Activated CD4-positive, alpha-beta T cell treated with anti-CD3 and anti-CD28 coated beads for 36 hours (primary cell): ENCODE measurements at regions of chr7 and their contacts with region 1.

Region 1: GRCh38 chr7:134514663-134515062 is 12.7 kb upstream of the AKR1B10 start:
- DNase-seq: peak; percentile 15
- ATAC-seq: peak; percentile 77
- H3K4me3 Mint-ChIP-seq: no peak overlapping the region
- H3K27ac Mint-ChIP-seq: no peak overlapping the region
- H3K4me1 Mint-ChIP-seq: peaks cover 10% of the 10 kb centered on the region
- H3K27me3 Mint-ChIP-seq: peaks cover 5% of the 10 kb centered on the region

Region 2: DNA sequence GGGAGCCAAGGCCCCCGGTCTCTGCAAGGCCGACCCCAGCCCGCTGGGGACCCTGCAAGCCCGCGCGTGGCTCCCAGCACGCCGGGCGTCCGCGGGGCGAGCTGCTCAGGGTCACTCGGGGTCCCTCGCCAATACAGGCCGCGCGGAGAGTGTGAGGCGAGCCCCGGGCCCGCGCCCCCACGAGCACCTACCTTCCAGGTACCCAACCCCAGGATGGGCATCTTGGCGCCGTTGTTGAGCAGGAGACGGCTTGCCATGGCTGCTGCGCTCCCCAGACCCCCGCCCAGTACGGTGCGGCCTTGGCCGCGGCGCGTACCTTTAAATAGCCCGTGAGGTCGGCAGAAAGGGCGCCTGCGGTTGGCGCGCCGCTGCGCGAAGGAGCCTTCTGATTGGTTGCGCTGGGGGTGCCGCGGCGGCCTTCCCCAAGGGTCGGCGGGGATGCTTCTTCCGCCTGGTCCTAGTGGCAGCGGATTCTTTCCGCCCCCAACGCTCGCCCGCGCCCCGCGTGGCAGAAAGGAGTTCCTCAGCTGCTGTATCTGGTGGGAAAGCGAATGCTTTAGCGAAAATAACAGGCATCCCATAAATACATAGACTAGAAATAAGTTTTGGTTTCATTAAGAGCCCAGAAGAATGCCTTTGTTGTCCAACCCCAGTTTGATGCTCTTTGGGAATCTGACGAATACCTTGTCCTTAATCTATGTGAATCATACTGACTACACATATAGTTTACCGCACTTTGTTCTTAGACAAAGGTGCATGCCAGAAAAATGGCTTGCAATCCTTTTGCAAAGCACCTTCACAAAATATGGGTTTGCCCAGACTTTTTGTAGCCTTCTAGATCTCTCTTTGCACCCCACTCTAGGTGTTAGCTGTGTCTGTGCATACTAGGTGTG is 55.6 kb before region 1 on chr7 and contains the start of gene AKR1B1:
- CTCF ChIA-PET with region 1: interaction called, 13 read pairs
- POLR2A ChIA-PET with region 1: no interaction called
- intact Hi-C with region 1: loop called in 1 of 2 experiments (anchors 1 kb)
- DNase-seq: peak; percentile 94
- ATAC-seq: peak; percentile 92
- H3K4me3 Mint-ChIP-seq: peak within 1 kb of the TSS; percentile 83
- H3K27ac Mint-ChIP-seq: peak within 1 kb of the TSS; percentile 76
- H3K4me1 Mint-ChIP-seq: peaks cover 51% of the 10 kb centered on the region
- H3K27me3 Mint-ChIP-seq: no peaks in the 10 kb centered on the region
- total RNA-seq, gene AKR1B1: 88.1 to 120 TPM

Region 3: DNA sequence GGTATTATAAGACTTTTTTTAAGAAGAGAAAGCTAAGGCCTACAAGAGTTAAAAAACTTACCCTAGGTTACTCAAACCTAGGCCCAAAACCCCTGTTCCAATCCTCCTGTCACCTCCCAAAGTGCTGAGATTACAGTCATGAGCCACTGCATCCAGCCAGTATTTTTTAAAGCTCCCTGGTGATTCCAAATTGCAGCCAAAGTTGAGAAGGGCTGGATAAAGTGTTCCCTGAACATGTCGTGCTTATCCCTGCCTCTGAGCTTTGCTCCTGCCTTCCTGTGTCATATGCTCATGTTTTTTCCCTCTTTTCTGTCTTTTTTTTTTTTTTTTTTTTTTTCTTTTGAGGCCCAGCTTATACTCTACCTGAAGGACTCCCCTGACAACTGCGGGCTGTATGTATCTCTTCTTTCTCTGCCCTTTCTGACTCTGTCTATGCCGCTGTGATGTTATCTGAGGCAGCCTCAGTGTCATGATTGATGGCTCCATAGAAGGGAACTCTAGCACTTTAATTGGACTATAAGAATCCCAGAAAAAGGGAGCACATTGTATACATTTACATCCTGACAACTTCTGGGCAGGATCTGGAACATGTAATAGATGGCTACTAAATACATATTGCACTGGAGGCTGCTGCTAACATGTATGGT is 20.7 kb after region 1 on chr7:
- CTCF ChIA-PET with region 1: interaction called, 10 read pairs
- POLR2A ChIA-PET with region 1: no interaction called
- intact Hi-C with region 1: no loop called
- DNase-seq: no peak
- ATAC-seq: no peak
- H3K4me3 Mint-ChIP-seq: no peak overlapping the region
- H3K27ac Mint-ChIP-seq: no peak overlapping the region
- H3K4me1 Mint-ChIP-seq: no peaks in the 10 kb centered on the region
- H3K27me3 Mint-ChIP-seq: peaks cover 6% of the 10 kb centered on the region

Region 4: GRCh38 chr7:134547397-134548054 is 32.9 kb after region 1 on chr7:
- CTCF ChIA-PET with region 1: interaction called, 4 read pairs
- POLR2A ChIA-PET with region 1: interaction called, 3 read pairs
- intact Hi-C with region 1: loop called in 1 of 2 experiments (anchors 1 kb)
- DNase-seq: peak; percentile 82
- ATAC-seq: peak; percentile 79
- H3K4me3 Mint-ChIP-seq: no peak overlapping the region
- H3K27ac Mint-ChIP-seq: no peak overlapping the region
- H3K4me1 Mint-ChIP-seq: peaks cover 4% of the 10 kb centered on the region
- H3K27me3 Mint-ChIP-seq: peaks cover 16% of the 10 kb centered on the region

Region 5: DNA sequence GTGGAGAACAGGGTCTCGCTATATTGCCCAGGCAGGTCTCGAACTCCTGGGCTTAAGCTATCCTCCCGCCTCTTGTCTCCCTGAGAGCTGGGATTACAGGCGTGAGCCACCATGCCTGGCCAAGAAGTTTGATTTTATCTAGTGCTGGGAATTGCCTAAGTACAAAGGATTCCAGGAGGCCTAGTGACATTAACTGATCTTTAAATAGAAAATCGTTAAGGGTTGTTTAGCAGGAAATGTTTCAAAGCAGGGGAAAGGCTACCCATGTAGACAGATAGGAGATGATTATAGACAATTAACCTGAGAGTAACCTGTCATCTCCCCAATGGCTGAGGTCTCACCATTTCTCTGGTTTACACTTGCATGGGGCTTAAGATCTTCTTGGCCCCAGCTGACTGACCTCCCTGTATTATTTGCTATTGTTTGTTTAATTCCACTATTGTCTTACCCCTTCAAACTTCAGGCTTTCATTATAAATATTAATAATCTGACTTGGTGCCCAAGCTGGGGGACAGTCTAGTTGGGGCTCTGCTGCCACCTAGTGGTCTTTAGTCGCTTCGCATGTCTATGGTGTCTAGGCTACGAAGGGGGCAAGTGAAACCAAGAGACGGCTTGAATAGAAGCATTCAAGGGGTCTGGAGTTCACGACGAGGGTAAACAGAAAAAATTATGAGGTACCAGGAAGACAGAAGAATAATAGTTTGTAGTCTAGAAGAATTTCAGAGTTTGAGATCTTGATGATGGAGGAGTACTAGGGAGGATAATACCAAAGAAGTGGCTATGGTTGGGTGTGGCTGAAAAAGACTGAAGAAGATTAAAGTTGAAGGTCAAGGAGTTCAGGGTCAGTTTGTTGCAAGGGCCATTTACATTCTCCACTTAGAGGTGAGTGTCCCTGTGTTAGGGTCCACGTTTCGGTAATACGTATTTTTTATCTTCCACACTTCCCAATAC is 91.6 kb after region 1 on chr7:
- CTCF ChIA-PET with region 1: interaction called, 10 read pairs
- POLR2A ChIA-PET with region 1: no interaction called
- intact Hi-C with region 1: loop called (anchors 1 kb)
- DNase-seq: peak; percentile 78
- ATAC-seq: peak; percentile 93
- H3K4me3 Mint-ChIP-seq: peak overlapping the region; percentile 25
- H3K27ac Mint-ChIP-seq: no peak overlapping the region
- H3K4me1 Mint-ChIP-seq: peaks cover 3% of the 10 kb centered on the region
- H3K27me3 Mint-ChIP-seq: peaks cover 28% of the 10 kb centered on the region